ENCODE measurements at regions of chr6 and their contacts with region 1.

Region 1: GRCh38 chr6:33840048-33840926 is 36.5 kb upstream of the MLN start:
- DNase-seq: no peak
- H3K4me3 ChIP-seq: no peak overlapping the region
- H3K27ac ChIP-seq: no peak overlapping the region
- H3K4me1 ChIP-seq: peaks cover 0 to 19% (median 11%) of the 10 kb centered on the region in 4 experiments; a peak in 6 of 7 replicates
- H3K27me3 ChIP-seq: 0 out of 7 replicates have a peak, but pooled peaks cover 0 to 3% (median 0%) of the 10 kb centered on the region in 4 experiments
- CTCF ChIP-seq: no peak
- EP300 ChIP-seq: no peak
- POLR2A ChIP-seq: no peak
- RAD21 ChIP-seq: no peak

Region 2: GRCh38 chr6:33851959-33852358 is 11.7 kb after region 1 on chr6:
- CTCF ChIA-PET with region 1: interaction called, 45 read pairs
- POLR2A ChIA-PET with region 1: interaction called, 3 read pairs
- DNase-seq: peak; percentile 66 to 71
- H3K4me3 ChIP-seq: no peak overlapping the region
- H3K27ac ChIP-seq: no peak overlapping the region
- H3K4me1 ChIP-seq: peaks cover 0 to 5% (median 2%) of the 10 kb centered on the region in 4 experiments; a peak in 4 of 7 replicates
- H3K27me3 ChIP-seq: no peaks in the 10 kb centered on the region
- CTCF ChIP-seq: peak in 2 of 3 experiments; percentile 84 to 93; a peak in 3 of 4 replicates
- EP300 ChIP-seq: no peak
- POLR2A ChIP-seq: no peak
- RAD21 ChIP-seq: peak; percentile 88 to 96

Region 3: DNA sequence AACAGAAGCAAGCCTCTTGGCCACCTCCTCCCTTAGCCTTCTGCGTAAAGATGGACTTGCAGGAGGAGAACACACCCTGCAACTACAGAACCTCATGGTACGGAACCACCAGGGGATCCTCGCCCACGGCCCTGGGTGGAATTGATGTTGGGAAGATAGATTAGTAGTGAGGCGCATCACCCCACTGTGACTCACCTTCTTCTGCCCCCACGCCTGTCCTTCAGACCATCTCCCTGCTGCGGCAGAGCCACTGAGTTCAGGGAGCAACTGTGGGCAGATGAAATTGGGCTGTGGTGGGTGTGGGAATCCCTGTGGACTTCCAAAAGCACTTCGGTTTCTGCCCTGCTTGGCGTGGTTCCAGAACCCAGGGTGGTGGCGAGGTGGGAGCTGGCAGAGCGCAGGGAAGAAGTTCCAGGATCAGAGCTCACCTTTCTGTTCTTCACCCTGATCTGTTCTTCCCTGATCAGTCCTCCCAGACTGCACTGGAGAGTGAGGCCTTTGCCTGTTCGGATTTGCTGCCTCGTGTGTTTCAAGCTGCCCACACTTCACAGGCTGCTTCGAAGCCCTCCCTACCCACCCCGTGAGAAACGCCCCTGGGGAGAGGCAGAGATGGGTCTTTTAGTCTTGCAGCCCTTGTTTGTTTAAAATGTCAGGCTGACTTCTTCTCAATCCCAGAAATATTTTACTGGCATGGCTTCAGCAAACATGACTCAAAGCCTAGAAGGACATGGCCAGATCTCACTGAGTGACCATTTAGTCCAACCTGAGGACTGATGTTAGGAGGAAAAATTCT is 56.3 kb after region 1 on chr6:
- CTCF ChIA-PET with region 1: no interaction called
- POLR2A ChIA-PET with region 1: no interaction called
- DNase-seq: no peak
- H3K4me3 ChIP-seq: no peak overlapping the region
- H3K27ac ChIP-seq: no peak overlapping the region
- H3K4me1 ChIP-seq: no peaks in the 10 kb centered on the region; a peak in 1 of 7 replicates
- H3K27me3 ChIP-seq: peaks cover 0 to 3% (median 0%) of the 10 kb centered on the region in 4 experiments; a peak in 2 of 7 replicates
- CTCF ChIP-seq: no peak
- EP300 ChIP-seq: no peak
- POLR2A ChIP-seq: no peak
- RAD21 ChIP-seq: no peak